ACHN (cell line): ENCODE measurements at regions of chr18 and their contacts with region 1.

Region 1: DNA sequence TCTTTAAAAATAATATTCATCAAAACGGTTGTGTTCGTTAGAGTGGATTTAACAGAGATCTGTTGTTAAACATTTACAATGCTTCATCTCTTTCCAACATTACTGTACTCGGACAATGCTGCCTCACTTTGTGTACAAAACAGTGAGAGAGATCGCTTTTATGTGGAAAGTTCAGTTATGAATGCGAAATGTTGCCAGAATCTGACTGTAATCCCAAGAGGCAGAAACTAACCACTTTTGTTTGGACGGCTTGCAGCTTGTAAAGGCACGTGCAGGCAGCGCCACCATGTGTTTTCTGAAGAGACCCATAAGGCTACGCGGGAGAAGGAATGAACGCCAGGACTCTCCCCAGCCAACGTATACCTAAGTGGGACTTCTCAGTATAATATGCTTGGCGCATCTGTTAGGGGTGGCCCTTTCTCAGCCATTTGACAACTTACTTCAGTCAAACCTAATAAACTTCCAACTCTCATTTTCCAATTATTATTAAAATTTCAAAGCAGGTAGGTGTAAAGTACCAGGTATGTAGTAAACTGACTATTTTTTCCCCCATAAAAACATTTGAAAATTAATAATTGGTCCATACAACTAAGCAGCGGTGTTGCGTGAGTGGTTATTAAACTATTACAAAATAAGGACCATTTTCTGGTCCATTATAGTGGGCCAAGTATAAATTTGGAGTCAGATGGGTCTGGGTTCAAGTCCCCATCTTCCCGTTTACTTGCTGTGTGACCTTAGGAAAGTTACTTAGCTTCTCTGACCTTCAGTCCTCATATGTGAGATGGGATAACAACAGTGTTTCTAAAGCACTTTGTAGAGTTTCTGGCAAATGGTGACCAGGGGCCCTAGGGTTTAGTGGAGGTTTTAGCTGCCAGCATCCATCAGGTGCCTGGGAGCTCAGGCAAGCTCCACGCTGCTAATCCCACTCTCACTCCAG is 5.6 kb upstream of the NAPG start:
- DNase-seq: peak; percentile 78

Region 2: GRCh38 chr18:9971313-9971920 is 548.9 kb before region 1 on chr18:
- in situ Hi-C with region 1: loop called (anchors 25 kb)
- DNase-seq: peak; percentile 71

Region 3: GRCh38 chr18:10442551-10442971 is 77.7 kb before region 1 on chr18:
- in situ Hi-C with region 1: no loop called
- DNase-seq: no peak

Region 4: GRCh38 chr18:10936176-10937053 is 416.1 kb after region 1 on chr18:
- in situ Hi-C with region 1: no loop called
- DNase-seq: no peak